IMR-90 (cell line): ENCODE measurements at regions of chr18 and their contacts with region 1.

Region 1: GRCh38 chr18:47204908-47205522 is 28.9 kb upstream of the IER3IP1 start:
- DNase-seq: peak; percentile 27
- ATAC-seq: peak; percentile 69
- H3K4me3 ChIP-seq: no peak overlapping the region
- H3K27ac ChIP-seq: no peak overlapping the region
- H3K4me1 ChIP-seq: no peaks in the 10 kb centered on the region
- H3K27me3 ChIP-seq: peaks cover 4% of the 10 kb centered on the region
- CTCF ChIP-seq: peak; percentile 84
- POLR2A ChIP-seq: no peak
- RAD21 ChIP-seq: peak; percentile 73

Region 2: GRCh38 chr18:47050468-47050867 is 154.5 kb before region 1 on chr18:
- CTCF ChIA-PET with region 1: interaction called, 6 read pairs
- POLR2A ChIA-PET with region 1: no interaction called
- dilution Hi-C with region 1: no loop called
- in situ Hi-C with region 1: no loop called
- intact Hi-C with region 1: loop called (anchors 1 kb)
- DNase-seq: peak; percentile 60
- ATAC-seq: peak; percentile 66
- H3K4me3 ChIP-seq: no peak overlapping the region
- H3K27ac ChIP-seq: no peak overlapping the region
- H3K4me1 ChIP-seq: no peaks in the 10 kb centered on the region
- H3K27me3 ChIP-seq: no peaks in the 10 kb centered on the region; the same call in 1 of the 2 replicates
- CTCF ChIP-seq: peak; percentile 67
- POLR2A ChIP-seq: no peak
- RAD21 ChIP-seq: peak; percentile 63

Region 3: GRCh38 chr18:47254341-47254939 is 49.4 kb after region 1 on chr18:
- CTCF ChIA-PET with region 1: no interaction called
- POLR2A ChIA-PET with region 1: no interaction called
- dilution Hi-C with region 1: no loop called
- in situ Hi-C with region 1: no loop called
- intact Hi-C with region 1: no loop called
- DNase-seq: peak; percentile 22
- ATAC-seq: peak; percentile 72
- H3K4me3 ChIP-seq: no peak overlapping the region
- H3K27ac ChIP-seq: no peak overlapping the region
- H3K4me1 ChIP-seq: no peaks in the 10 kb centered on the region
- H3K27me3 ChIP-seq: peaks cover 46% of the 10 kb centered on the region
- CTCF ChIP-seq: no peak
- POLR2A ChIP-seq: no peak
- RAD21 ChIP-seq: no peak

Region 4: GRCh38 chr18:47284721-47285395 is 79.8 kb after region 1 on chr18:
- CTCF ChIA-PET with region 1: no interaction called
- POLR2A ChIA-PET with region 1: no interaction called
- dilution Hi-C with region 1: no loop called
- in situ Hi-C with region 1: no loop called
- intact Hi-C with region 1: no loop called
- DNase-seq: no peak
- ATAC-seq: no peak
- H3K4me3 ChIP-seq: no peak overlapping the region
- H3K27ac ChIP-seq: no peak overlapping the region
- H3K4me1 ChIP-seq: no peaks in the 10 kb centered on the region
- H3K27me3 ChIP-seq: no peaks in the 10 kb centered on the region
- CTCF ChIP-seq: no peak
- POLR2A ChIP-seq: no peak
- RAD21 ChIP-seq: no peak